ENCODE measurements at regions of chr12 and their contacts with region 1.

Region 1: DNA sequence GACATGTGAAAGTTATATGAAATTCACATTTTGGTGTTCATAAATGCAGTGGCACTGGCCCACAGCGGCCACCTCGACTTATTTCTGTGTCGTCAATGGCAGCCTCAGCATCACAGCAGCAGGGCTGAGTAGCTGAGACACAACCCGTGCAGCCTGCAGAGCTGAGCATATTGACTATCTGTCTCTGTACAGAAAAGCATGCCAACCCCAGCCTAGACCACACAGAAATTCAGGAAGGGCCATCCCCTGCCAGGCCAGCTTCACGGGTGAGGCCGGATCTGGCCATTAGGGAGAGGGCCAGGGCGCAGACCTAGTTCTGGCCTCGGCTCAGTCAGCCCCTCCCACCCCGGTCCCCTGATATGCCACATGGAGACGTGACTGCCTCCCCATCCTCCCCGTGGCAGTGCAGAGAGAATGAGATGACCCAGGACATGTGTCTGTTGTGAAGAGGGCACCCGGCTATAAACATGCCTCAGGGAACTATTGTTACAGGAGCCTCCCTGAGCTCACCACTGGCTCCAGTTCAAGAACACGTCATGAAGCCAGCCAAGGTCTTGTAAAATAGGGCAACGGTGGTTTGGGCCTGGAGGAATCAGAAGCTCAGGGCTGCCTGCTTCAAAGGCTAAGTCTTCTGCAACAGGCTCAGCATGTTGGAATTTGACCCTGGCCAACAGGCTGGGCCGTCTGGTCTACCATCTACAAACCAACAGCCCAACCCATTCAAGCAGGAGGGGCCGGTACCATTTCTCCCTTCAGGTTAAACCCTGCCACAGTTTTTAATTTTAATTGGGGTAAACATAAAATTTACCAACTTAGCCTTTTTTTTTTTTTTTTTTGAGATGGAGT is 25.5 kb downstream of the SCARB1 start:
- DNase-seq: no peak
- ATAC-seq: no peak
- H3K4me3 ChIP-seq: no peak overlapping the region
- H3K4me3 Mint-ChIP-seq: no peak overlapping the region
- H3K27ac ChIP-seq: no peak overlapping the region
- H3K27ac Mint-ChIP-seq: no peak overlapping the region
- H3K4me1 ChIP-seq: no peaks in the 10 kb centered on the region
- H3K4me1 Mint-ChIP-seq: no peaks in the 10 kb centered on the region
- H3K27me3 ChIP-seq: no peaks in the 10 kb centered on the region
- H3K27me3 Mint-ChIP-seq: no peaks in the 10 kb centered on the region

Region 2: GRCh38 chr12:124754949-124755800 is 83.0 kb before region 1 on chr12:
- CTCF ChIA-PET with region 1: no interaction called
- POLR2A ChIA-PET with region 1: no interaction called
- DNase-seq: peak in 12 of 35 experiments; percentile 7 to 48 (median 12)
- ATAC-seq: peak; percentile 31 to 70 (median 62)
- H3K4me3 ChIP-seq: no peak overlapping the region
- H3K4me3 Mint-ChIP-seq: peak overlapping the region in 2 of 3 donors; percentile 4 to 61
- H3K27ac ChIP-seq: no peak overlapping the region
- H3K27ac Mint-ChIP-seq: peak overlapping the region in 1 of 2 donors; percentile 31
- H3K4me1 ChIP-seq: peaks cover 8 to 22% of the 10 kb centered on the region in 2 experiments
- H3K4me1 Mint-ChIP-seq: peaks cover 12 to 15% (median 14%) of the 10 kb centered on the region in 3 donors
- H3K27me3 ChIP-seq: peaks cover 0 to 34% of the 10 kb centered on the region in 2 experiments
- H3K27me3 Mint-ChIP-seq: peaks cover 4 to 18% of the 10 kb centered on the region in 2 donors

Region 3: DNA sequence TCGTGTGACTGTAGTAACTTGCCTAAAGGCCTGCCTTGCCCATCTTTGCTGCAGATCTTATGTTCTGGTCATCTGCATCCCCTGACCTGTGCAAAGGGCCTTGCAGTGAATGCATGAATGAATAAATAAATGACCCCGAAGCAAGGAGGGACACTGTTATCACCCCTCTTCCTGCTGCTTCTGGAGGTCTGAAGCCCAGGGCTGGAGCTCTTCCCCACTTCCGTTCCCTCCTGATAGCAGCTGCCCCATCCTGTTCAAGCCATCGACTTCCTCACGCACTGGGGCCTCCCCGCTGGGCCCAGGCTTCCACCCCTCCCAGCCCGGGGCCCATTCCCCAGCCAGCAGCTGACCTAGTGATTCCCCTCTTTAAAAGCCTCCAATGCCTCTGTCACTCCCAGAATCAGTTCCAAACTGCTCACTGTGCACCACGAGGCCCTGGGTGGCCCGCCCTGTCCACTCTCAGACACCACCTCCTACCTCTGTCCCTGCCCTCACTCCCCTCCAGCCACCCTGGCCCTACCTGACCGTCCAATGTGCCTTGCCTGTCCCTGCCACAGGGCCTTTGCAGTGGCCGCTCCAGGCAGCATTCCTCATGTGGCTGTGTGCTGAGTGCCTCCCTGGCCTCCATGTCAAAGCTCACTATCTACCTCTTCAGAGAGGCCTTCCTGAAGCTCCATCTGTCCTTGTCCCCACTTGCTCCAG is 53.2 kb before region 1 on chr12:
- CTCF ChIA-PET with region 1: interaction called in 1 of 2 experiments, 13 read pairs
- POLR2A ChIA-PET with region 1: no interaction called
- DNase-seq: no peak
- ATAC-seq: no peak
- H3K4me3 ChIP-seq: no peak overlapping the region
- H3K4me3 Mint-ChIP-seq: no peak overlapping the region
- H3K27ac ChIP-seq: no peak overlapping the region
- H3K27ac Mint-ChIP-seq: no peak overlapping the region
- H3K4me1 ChIP-seq: no peaks in the 10 kb centered on the region
- H3K4me1 Mint-ChIP-seq: no peaks in the 10 kb centered on the region
- H3K27me3 ChIP-seq: peaks cover 0 to 4% of the 10 kb centered on the region in 2 experiments
- H3K27me3 Mint-ChIP-seq: no peaks in the 10 kb centered on the region

Region 4: DNA sequence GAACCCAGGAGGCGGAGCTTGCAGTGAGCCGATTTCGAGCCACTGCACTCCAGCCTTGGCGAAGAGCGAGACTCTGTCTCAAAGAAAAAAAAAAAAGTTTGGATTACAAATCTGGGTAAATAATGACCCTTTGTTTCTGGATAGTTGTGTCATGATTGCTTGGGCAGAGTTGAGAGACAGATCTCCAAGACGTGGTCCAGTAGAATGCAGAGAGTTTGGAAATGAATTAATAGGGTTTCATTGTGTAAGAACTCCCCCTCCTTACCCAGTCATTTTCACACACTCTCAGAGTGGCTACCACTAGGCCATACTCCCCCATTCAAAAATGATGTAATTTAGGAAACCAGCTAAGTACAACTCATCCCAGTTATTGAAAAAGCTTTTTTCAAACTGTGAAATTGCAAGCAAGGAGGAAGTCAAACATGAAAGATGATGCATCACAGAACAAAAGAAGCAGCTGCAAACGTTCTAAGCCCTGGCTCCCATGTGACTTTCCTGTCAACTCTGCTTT is 1558.9 kb after region 1 on chr12:
- CTCF ChIA-PET with region 1: no interaction called
- POLR2A ChIA-PET with region 1: no interaction called
- DNase-seq: no peak
- ATAC-seq: no peak
- H3K4me3 ChIP-seq: no peak overlapping the region
- H3K4me3 Mint-ChIP-seq: no peak overlapping the region
- H3K27ac ChIP-seq: no peak overlapping the region
- H3K27ac Mint-ChIP-seq: no peak overlapping the region
- H3K4me1 ChIP-seq: no peaks in the 10 kb centered on the region
- H3K4me1 Mint-ChIP-seq: peaks cover 0 to 3% (median 0%) of the 10 kb centered on the region in 3 donors
- H3K27me3 ChIP-seq: no peaks in the 10 kb centered on the region
- H3K27me3 Mint-ChIP-seq: no peaks in the 10 kb centered on the region